ENCODE measurements at regions of chr3 and their contacts with region 1.

Region 1: DNA sequence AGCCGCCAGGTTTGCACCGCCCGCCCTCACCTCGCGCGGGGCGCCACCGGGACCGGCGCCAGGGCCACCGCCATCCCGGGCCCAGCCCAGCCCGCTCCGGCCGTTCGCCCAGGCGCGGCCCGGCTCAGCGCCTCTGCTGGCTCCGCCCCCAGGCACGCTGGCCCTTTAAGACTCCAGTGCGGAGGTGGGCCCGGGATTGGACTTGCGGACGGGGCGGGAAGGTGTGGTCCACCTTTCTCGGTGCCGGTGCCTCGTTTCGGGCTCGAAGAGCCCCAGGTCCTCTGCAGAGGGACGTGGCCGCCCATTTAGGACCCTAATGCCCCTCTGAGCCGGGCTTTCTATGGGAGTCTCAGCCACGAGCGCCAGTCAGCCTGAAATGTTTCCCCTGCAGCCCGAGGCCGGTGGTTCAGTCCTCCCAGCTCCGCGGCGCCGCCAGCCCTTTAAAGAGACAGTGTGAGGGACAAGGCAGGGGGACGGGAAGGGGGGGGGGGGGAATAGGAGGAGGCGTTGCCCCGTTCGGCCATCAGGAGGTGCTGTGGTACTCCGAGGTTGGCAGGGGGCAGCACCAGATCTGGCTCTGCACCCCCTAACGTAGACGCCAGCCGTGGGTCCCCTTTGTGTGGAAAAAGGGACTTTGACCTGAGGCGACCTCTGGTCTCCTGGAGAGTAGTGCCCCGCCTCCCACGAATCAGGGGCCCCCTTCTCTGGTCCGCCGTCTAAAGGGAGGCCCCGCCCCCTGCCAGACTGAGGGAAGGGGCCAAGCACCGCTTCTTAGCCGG is 1.0 kb downstream of the HYAL2 start:
- DNase-seq: peak; percentile 72 to 74 (median 72)
- H3K4me3 ChIP-seq: peak overlapping the region; percentile 60 to 90 (median 77)
- H3K4me3 Mint-ChIP-seq: peak overlapping the region; percentile 86 to 91
- H3K27ac ChIP-seq: peak overlapping the region; percentile 77 to 97
- H3K27ac Mint-ChIP-seq: peak overlapping the region; percentile 85 to 99 (median 97)
- H3K4me1 ChIP-seq: peaks cover 83 to 94% of the 10 kb centered on the region in 2 donors
- H3K4me1 Mint-ChIP-seq: peaks cover 83% of the 10 kb centered on the region
- H3K27me3 ChIP-seq: no peaks in the 10 kb centered on the region
- H3K27me3 Mint-ChIP-seq: peaks cover 0 to 4% (median 2%) of the 10 kb centered on the region in 3 donors
- CTCF ChIP-seq: peak; percentile 58

Region 2: GRCh38 chr3:50278868-50279224 is 42.7 kb before region 1 on chr3 and contains the start of gene LSMEM2:
- intact Hi-C with region 1: no loop called
- DNase-seq: no peak
- H3K4me3 ChIP-seq: no peak within 1 kb of the TSS
- H3K4me3 Mint-ChIP-seq: peak within 1 kb of the TSS in 1 of 2 donors; percentile 65
- H3K27ac ChIP-seq: no peak within 1 kb of the TSS
- H3K27ac Mint-ChIP-seq: peak within 1 kb of the TSS in 1 of 7 donors; percentile 1
- H3K4me1 ChIP-seq: peaks cover 7 to 23% of the 10 kb centered on the region in 2 donors
- H3K4me1 Mint-ChIP-seq: peaks cover 21% of the 10 kb centered on the region
- H3K27me3 ChIP-seq: peaks cover 22 to 41% of the 10 kb centered on the region in 2 donors
- H3K27me3 Mint-ChIP-seq: peaks cover 39 to 53% (median 47%) of the 10 kb centered on the region in 3 donors
- CTCF ChIP-seq: no peak
- polyA plus RNA-seq, gene LSMEM2: not detected

Region 3: GRCh38 chr3:50292159-50293078 is 29.1 kb before region 1 on chr3 and contains the start of gene IFRD2:
- intact Hi-C with region 1: loop called in 1 of 2 experiments (anchors 2 kb)
- DNase-seq: peak; percentile 96 to 98 (median 97)
- H3K4me3 ChIP-seq: peak within 1 kb of the TSS; percentile 65 to 82 (median 70)
- H3K4me3 Mint-ChIP-seq: peak within 1 kb of the TSS; percentile 70 to 93
- H3K27ac ChIP-seq: peak within 1 kb of the TSS; percentile 57 to 90
- H3K27ac Mint-ChIP-seq: peak within 1 kb of the TSS; percentile 87 to 98 (median 94)
- H3K4me1 ChIP-seq: peaks cover 16 to 24% of the 10 kb centered on the region in 2 donors
- H3K4me1 Mint-ChIP-seq: peaks cover 15% of the 10 kb centered on the region
- H3K27me3 ChIP-seq: no peaks in the 10 kb centered on the region
- H3K27me3 Mint-ChIP-seq: peaks cover 0 to under 1% (median 0%) of the 10 kb centered on the region in 3 donors
- CTCF ChIP-seq: no peak
- polyA plus RNA-seq, gene IFRD2: 17.1 to 35.1 (median 23.3) TPM

Region 4: GRCh38 chr3:50298836-50299637 is 22.5 kb before region 1 on chr3 and contains the starts of genes HYAL3 and NAA80:
- intact Hi-C with region 1: loop called (anchors 2 kb)
- DNase-seq: peak; percentile 98 to 100 (median 100)
- H3K4me3 ChIP-seq: peak within 1 kb of the TSS; percentile 40 to 94 (median 84)
- H3K4me3 Mint-ChIP-seq: peak within 1 kb of the TSS; percentile 90 to 95
- H3K27ac ChIP-seq: peak within 1 kb of the TSS; percentile 99 to 100
- H3K27ac Mint-ChIP-seq: peak within 1 kb of the TSS; percentile 99
- H3K4me1 ChIP-seq: peaks cover 32 to 37% of the 10 kb centered on the region in 2 donors
- H3K4me1 Mint-ChIP-seq: peaks cover 34% of the 10 kb centered on the region
- H3K27me3 ChIP-seq: no peaks in the 10 kb centered on the region
- H3K27me3 Mint-ChIP-seq: no peaks in the 10 kb centered on the region
- CTCF ChIP-seq: peak; percentile 63
- polyA plus RNA-seq, gene HYAL3: 3.4 to 5.8 (median 4.9) TPM
- polyA plus RNA-seq, gene NAA80: 2.3 to 21.3 (median 4.6) TPM